ENCODE measurements at regions of chr11 and their contacts with region 1.

Region 1: DNA sequence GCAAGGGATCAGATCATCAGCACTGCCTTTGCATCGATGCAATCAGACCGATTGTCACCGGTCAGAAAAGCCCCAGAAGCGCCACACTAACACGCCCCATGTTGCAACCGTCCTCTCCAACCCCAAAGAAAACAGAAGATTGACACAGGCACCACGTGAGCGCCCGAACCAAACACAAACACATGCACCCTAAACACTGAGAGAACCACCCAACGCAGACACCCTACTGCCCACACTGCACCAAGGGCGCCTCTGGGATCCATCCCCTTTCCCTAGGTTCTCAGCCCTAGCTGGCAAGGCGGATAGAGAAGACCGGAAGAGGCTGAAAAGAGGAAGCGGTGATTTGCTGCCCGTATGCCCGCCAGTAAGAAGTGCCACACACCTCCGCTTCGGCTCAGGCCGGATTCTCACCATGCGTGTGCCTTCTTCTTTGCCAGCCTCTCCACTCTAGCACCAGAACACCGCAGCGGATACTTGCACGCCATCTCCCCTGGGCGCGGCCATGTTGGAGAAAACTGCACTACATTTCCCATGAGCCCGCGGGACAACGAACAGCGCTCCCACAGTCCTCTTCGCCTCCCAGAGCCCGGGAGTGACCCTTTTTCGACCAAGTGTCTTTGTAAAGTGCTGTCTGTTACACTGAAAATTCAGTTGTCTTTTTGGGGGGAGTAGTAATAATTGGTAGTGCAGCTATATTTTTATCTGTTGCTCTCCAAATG is at the start of gene ALKBH8:
- DNase-seq: peak; percentile 84
- ATAC-seq: peak; percentile 90
- H3K4me3 ChIP-seq: peak within 1 kb of the TSS; percentile 57 to 94 (median 80)
- H3K4me3 Mint-ChIP-seq: peak within 1 kb of the TSS; percentile 97
- H3K27ac ChIP-seq: peak within 1 kb of the TSS; percentile 71 to 81
- H3K27ac Mint-ChIP-seq: peak within 1 kb of the TSS; percentile 96
- H3K4me1 ChIP-seq: peaks cover 37% of the 10 kb centered on the region in 2 donors
- H3K4me1 Mint-ChIP-seq: peaks cover 46% of the 10 kb centered on the region
- H3K27me3 ChIP-seq: no peaks in the 10 kb centered on the region
- H3K27me3 Mint-ChIP-seq: no peaks in the 10 kb centered on the region
- CTCF ChIP-seq: no peak
- total RNA-seq, gene ALKBH8: 13.3 and 13.5 TPM in 2 replicates

Region 2: DNA sequence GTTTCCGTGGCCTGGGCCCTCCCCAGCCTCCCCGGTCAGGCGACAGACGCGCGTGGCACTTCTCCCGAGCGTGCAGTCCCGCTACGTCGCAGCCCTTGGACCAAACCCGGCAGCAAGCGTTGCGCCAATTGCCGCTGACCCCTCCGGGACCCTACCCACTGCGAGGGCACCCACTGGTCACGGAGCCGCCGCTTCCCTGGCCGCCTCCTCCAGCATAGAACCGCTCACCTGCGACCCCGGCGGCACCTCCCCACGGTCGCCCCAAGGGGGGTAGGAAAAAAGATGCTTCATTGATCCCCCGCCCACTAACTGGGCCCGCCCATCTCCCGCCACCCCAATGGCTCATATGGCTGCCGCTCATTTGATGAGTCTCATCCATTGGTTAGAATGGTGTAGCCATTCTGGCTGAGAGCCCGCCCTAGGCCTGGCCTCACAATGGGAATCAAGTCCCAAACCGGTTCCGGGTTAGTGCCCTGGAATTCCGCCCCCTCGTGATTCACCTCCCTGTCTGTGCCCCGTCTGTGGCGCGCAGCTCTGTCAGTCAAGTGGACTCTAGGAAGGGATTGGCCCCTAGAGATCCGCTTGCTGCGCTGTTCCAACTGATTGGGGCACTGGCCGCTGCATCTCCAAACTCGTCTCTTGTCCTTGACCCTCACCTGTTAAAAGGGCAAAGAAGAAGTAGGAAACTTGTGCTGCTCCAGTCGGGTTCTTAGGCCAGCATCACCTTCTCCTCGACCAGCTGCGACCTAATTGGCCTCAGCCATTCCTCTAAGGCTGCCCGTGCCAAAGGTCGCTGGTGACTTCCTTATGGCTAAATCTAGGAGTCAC is 1543.2 kb before region 1 on chr11 and contains the start of gene MSANTD4:
- CTCF ChIA-PET with region 1: no interaction called
- POLR2A ChIA-PET with region 1: no interaction called
- intact Hi-C with region 1: loop called (anchors 5 kb)
- DNase-seq: peak; percentile 96
- ATAC-seq: peak; percentile 96
- H3K4me3 ChIP-seq: peak within 1 kb of the TSS; percentile 66 to 96 (median 82)
- H3K4me3 Mint-ChIP-seq: peak within 1 kb of the TSS; percentile 91
- H3K27ac ChIP-seq: peak within 1 kb of the TSS; percentile 71 to 83
- H3K27ac Mint-ChIP-seq: peak within 1 kb of the TSS; percentile 86
- H3K4me1 ChIP-seq: peaks cover 11 to 17% of the 10 kb centered on the region in 2 donors
- H3K4me1 Mint-ChIP-seq: peaks cover 42% of the 10 kb centered on the region
- H3K27me3 ChIP-seq: no peaks in the 10 kb centered on the region
- H3K27me3 Mint-ChIP-seq: no peaks in the 10 kb centered on the region
- CTCF ChIP-seq: peak; percentile 10
- total RNA-seq, gene MSANTD4: 20.0 and 20.8 TPM in 2 replicates

Region 3: GRCh38 chr11:107549253-107549953 is 16.0 kb before region 1 on chr11:
- CTCF ChIA-PET with region 1: interaction called, 106 read pairs
- POLR2A ChIA-PET with region 1: no interaction called
- intact Hi-C with region 1: loop called (anchors 1 kb)
- DNase-seq: peak; percentile 59
- ATAC-seq: no peak
- H3K4me3 ChIP-seq: no peak overlapping the region
- H3K4me3 Mint-ChIP-seq: no peak overlapping the region
- H3K27ac ChIP-seq: no peak overlapping the region
- H3K27ac Mint-ChIP-seq: no peak overlapping the region
- H3K4me1 ChIP-seq: no peaks in the 10 kb centered on the region
- H3K4me1 Mint-ChIP-seq: no peaks in the 10 kb centered on the region
- H3K27me3 ChIP-seq: no peaks in the 10 kb centered on the region
- H3K27me3 Mint-ChIP-seq: no peaks in the 10 kb centered on the region
- CTCF ChIP-seq: peak; percentile 97

Region 4: DNA sequence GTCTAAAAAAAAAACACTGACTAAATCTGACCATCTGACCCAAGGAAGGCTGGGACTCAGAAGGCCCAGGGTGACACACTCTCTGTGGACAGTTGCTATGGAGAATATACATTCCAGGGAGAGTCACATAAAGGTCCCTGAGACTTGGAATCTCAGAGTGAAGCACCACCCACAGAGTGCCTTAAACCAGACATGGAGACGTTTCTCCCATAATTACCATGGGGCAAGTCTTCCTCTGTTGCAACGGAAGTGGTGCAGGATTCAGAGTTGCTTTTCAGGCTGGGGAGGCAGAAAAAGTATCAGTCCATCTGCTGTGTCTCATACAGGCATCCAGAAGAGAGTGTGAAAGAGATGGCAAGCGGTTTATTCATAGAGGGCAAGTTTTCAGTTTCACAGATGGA is 205.2 kb after region 1 on chr11:
- CTCF ChIA-PET with region 1: interaction called, 26 read pairs
- POLR2A ChIA-PET with region 1: no interaction called
- intact Hi-C with region 1: loop called (anchors 1 kb)
- DNase-seq: no peak
- ATAC-seq: no peak
- H3K4me3 ChIP-seq: no peak overlapping the region
- H3K4me3 Mint-ChIP-seq: no peak overlapping the region
- H3K27ac ChIP-seq: no peak overlapping the region
- H3K27ac Mint-ChIP-seq: no peak overlapping the region
- H3K4me1 ChIP-seq: no peaks in the 10 kb centered on the region
- H3K4me1 Mint-ChIP-seq: no peaks in the 10 kb centered on the region
- H3K27me3 ChIP-seq: no peaks in the 10 kb centered on the region
- H3K27me3 Mint-ChIP-seq: peaks cover 25% of the 10 kb centered on the region
- CTCF ChIP-seq: no peak

Region 5: GRCh38 chr11:107928046-107928766 is 362.8 kb after region 1 on chr11 and contains the start of gene RAB39A:
- CTCF ChIA-PET with region 1: no interaction called
- POLR2A ChIA-PET with region 1: no interaction called
- intact Hi-C with region 1: loop called (anchors 10 kb)
- DNase-seq: peak; percentile 94
- ATAC-seq: peak; percentile 85
- H3K4me3 ChIP-seq: peak within 1 kb of the TSS; percentile 44 to 89 (median 74)
- H3K4me3 Mint-ChIP-seq: peak within 1 kb of the TSS; percentile 88
- H3K27ac ChIP-seq: peak within 1 kb of the TSS; percentile 37 to 52
- H3K27ac Mint-ChIP-seq: peak within 1 kb of the TSS; percentile 88
- H3K4me1 ChIP-seq: peaks cover 16 to 19% of the 10 kb centered on the region in 2 donors
- H3K4me1 Mint-ChIP-seq: peaks cover 30% of the 10 kb centered on the region
- H3K27me3 ChIP-seq: peaks cover 0 to 3% (median 0%) of the 10 kb centered on the region in 4 experiments
- H3K27me3 Mint-ChIP-seq: peaks cover 5% of the 10 kb centered on the region
- CTCF ChIP-seq: no peak
- total RNA-seq, gene RAB39A: 2.4 TPM in 2 replicates

Region 6: GRCh38 chr11:108237058-108237481 is 671.7 kb after region 1 on chr11:
- CTCF ChIA-PET with region 1: no interaction called
- POLR2A ChIA-PET with region 1: interaction called, 10 read pairs
- intact Hi-C with region 1: no loop called
- DNase-seq: peak; percentile 52
- ATAC-seq: peak; percentile 26
- H3K4me3 ChIP-seq: peak overlapping the region in 3 of 5 experiments; percentile 11 to 57 (median 33)
- H3K4me3 Mint-ChIP-seq: peak overlapping the region; percentile 72
- H3K27ac ChIP-seq: peak overlapping the region; percentile 83 to 90
- H3K27ac Mint-ChIP-seq: peak overlapping the region; percentile 86
- H3K4me1 ChIP-seq: peaks cover 27 to 45% of the 10 kb centered on the region in 2 donors
- H3K4me1 Mint-ChIP-seq: peaks cover 43% of the 10 kb centered on the region
- H3K27me3 ChIP-seq: no peaks in the 10 kb centered on the region
- H3K27me3 Mint-ChIP-seq: no peaks in the 10 kb centered on the region
- CTCF ChIP-seq: no peak

Measured in B cell (primary cell).